GM13976 (cell line): ENCODE measurements at regions of chr14 and their contacts with region 1.

Region 1: DNA sequence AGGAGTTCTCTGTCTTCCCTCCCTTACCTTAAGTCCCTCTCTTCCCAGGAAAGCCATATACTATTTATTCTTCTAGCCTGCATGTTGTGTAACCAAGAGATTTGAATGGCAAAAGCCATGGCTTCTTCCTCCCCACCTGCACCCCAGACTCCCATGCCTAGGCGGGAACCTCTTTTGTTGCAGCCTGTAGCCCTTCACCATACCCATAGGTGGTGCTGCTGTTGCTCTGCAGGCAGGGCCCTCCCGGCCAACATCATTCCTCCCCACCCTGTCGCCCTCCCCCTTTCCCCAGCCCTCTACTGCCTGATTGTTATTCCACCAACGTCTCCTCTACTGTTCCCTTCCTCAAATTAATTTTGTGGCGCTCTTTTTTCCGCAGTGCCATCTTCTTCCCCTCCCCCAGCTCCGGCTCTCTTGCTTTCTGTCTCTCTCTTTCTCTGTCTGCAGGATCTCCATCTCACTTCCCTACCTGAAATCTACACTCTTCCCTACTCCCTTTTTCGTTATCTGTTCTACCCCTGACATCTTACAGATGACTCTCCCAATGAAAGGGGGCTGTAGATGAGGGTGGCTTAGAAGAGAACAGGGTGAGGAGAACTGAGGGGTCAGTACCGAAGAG is 13.8 kb downstream of the NGDN start:
- DNase-seq: peak; percentile 47
- CTCF ChIP-seq: peak; percentile 20

Region 2: DNA sequence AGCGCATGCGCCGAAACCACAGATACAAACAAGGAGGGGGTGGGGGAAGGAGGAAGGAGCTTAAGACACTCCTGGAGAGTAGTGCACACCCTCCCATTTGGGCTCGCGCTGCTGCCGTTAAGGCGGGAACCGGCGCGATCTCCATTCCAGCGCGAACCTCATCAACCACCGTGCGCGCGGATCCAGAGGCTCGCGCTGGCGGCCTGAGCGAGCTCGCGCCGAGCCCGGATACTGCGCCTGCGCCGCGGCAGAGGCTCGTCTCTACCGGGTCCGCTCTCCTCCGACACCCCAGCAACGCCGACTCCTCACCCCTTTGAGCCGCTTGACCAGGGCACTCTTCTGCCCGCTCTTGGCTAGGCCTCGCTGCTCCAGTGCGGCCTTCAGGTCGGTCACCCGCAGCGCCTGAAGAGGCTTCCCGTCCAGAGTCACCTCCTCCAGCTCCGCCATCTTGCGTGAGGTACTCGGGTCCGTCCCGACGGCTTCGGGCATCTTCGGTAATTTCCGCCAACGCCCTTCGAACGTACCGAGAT is 388.6 kb before region 1 on chr14 and contains the start of gene ACIN1:
- in situ Hi-C with region 1: no loop called
- DNase-seq: peak; percentile 79
- CTCF ChIP-seq: no peak

Region 3: DNA sequence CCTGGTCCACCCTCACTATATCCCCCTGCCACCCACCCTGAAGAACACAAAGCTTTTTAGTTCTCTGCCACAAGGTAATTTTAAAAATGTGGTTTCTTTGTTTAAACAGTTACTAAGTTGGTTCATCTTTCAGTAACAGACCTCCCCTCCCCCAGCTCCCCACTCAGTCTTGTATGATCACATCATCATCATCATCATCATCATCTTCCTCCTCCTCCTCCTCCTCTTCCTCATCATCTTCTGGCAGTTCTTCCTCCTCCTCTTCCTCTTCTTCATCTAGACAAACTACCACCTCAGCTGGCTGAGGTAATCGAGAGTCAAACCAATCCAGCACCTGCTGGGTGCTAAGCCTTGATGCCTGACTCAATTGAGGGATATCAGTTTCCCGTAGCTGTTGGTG is 207.9 kb before region 1 on chr14:
- in situ Hi-C with region 1: no loop called
- DNase-seq: no peak
- CTCF ChIP-seq: no peak

Region 4: DNA sequence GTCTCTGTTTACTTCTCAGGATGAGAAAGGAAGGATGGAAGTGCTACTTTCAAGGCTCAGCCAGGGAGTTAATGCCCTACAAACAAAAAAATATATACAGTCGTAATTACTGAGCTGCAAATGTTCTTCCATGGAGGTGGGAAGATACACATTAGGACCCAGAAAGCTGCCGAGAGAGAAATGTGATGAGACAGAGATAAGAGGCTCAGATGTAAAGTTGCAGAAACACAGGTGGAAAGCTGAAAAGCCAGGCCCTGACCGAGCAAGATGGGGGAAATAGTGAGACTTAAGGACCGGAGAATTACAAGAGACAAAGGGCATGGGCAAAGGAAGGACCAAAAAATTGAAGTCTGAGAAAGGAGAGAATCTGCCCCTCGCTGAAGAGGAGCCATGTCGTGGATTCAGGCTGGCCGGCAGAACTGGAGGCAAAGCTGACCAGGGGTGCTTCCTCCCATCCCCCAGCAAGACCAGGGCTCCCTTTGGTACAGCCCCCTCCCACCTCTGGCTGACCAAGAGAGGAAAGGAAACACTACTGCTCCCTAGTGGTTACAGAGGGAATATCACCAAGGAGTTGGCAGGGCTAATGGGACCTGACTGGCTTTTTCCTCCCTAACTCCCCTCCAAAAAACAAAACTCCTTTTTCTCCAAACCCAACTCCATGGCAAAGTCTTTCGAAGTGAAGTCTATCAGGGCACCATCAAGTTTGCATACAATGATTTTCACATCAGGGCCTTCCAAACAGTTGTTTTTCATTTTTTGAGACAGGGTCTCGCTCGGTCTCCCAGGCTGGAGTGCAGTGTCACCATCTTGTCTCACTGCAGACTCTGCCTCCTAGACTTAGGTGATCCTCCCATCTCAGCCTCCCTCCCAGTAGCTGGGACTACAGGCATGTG is 56.1 kb after region 1 on chr14:
- in situ Hi-C with region 1: loop called (anchors 10 kb)
- DNase-seq: peak; percentile 84
- CTCF ChIP-seq: peak; percentile 65